Mammary epithelial cell (primary cell): ENCODE measurements at regions of chr7 and their contacts with region 1.

Region 1: GRCh38 chr7:44375236-44375699 is 49.9 kb upstream of the CAMK2B start:
- DNase-seq: no peak
- H3K4me3 ChIP-seq: no peak overlapping the region
- H3K27ac ChIP-seq: no peak overlapping the region
- H3K4me1 ChIP-seq: peaks cover 44% of the 10 kb centered on the region
- H3K27me3 ChIP-seq: no peaks in the 10 kb centered on the region
- CTCF ChIP-seq: peak in 1 of 2 donors; percentile 2

Region 2: DNA sequence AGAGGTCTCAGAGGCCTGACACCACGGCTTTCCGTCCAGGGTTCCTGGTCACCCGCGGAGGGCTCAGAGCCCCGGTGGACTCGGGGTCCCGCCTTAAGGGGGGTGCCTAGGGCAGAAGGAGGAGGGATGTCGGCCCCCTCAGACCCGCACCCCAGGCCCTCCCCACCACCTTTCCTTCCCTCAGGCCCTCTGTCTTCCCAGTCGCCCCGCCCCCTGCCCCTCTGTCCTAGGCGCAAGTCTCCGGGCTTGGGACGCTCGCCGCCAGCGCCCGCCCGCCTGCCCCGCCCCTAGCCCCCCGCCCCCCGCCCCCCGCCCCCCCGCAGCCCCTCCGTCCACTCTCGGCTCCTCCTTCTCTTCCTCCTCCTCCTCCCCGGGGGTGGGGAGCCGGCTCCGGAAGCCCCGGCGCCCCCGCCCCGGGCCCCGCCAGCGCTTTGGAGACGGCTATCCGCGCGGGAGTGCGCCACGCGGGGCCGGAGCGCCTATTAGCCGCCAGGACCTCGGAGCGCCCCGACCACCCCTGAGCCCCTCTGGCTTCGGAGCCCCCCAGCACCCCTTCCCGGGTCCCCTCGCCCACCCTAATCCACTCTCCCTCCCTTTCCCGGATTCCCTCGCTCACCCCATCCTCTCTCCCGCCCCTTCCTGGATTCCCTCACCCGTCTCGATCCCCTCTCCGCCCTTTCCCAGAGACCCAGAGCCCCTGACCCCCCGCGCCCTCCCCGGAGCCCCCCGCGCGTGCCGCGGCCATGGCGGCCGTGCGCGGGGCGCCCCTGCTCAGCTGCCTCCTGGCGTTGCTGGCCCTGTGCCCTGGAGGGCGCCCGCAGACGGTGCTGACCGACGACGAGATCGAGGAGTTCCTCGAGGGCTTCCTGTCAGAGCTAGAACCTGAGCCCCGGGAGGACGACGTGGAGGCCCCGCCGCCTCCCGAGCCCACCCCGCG is 271.1 kb before region 1 on chr7 and contains the start of gene AEBP1:
- CTCF ChIA-PET with region 1: no interaction called
- dilution Hi-C with region 1: no loop called
- in situ Hi-C with region 1: no loop called
- intact Hi-C with region 1: loop called (anchors 10 kb)
- DNase-seq: no peak
- H3K4me3 ChIP-seq: no peak within 1 kb of the TSS
- H3K27ac ChIP-seq: no peak within 1 kb of the TSS
- H3K4me1 ChIP-seq: peaks cover 22% of the 10 kb centered on the region
- H3K27me3 ChIP-seq: no peaks in the 10 kb centered on the region
- CTCF ChIP-seq: no peak
- total RNA-seq, gene AEBP1: 0.24 to 16.7 TPM

Region 3: DNA sequence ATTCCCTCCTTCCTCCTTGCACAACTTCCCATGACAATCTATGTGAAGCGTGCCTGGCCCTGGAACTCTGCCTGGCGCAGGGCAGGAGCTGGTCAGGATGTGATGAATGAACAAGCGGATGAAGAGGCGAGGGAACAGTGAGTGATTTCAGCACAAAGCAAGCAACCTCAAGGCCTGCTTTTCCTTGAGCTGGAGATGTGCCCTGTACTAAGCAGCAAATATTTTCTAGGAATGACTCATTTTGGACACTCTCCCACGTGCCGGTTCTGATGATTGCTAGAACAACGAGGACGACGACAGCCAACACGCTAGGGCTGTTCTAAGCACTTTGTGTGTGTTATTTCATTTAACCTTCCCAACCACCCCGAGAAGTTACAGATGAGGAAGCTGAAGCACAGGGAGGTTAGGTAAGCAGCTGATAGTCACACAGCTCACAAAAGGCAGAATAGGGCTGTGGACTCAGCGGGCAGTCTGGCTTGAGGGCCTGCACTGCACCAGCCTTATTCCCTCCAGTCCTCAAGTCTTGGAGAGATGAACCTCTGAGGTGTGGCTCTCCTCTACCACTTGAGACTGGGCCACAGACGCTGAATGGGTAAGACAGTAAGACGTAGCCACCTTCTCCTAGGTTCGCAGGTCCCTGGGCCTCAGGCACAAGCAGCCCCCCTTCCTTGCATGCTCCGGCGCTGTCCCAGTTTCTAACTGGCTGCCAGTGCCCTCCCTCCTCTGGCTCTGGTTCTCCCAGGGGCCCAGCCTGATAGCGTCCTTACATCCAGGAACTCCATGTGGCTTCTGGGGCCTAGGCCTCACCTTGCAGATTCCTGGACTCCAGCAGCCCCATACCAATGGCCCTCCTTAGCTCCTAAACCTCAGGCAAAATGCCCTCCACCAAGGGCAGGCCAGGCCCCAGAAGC is 115.5 kb before region 1 on chr7:
- CTCF ChIA-PET with region 1: no interaction called
- dilution Hi-C with region 1: no loop called
- in situ Hi-C with region 1: no loop called
- intact Hi-C with region 1: loop called (anchors 5 kb)
- DNase-seq: peak; percentile 71
- H3K4me3 ChIP-seq: no peak overlapping the region
- H3K27ac ChIP-seq: no peak overlapping the region
- H3K4me1 ChIP-seq: peaks cover 52% of the 10 kb centered on the region
- H3K27me3 ChIP-seq: no peaks in the 10 kb centered on the region
- CTCF ChIP-seq: no peak

Region 4: DNA sequence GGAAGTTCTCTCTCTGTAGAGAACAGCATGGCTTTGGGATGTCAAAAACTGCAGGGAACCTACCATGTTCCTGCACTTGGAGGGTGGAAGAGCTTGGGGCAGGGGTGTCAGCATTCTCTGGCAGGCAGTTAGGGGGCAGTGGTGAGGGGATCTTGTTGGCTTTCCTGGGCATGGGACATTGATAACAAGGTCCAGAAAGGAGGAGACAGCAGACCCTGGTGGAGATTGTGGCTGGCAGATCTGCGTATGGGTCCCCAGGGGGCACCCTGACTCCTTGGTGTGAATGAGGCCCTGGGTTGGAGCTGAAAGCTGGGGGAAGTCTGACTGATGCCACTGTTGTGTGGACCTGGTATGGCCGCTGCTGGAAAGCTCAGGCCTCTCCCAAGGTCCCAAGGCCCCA is 27.0 kb before region 1 on chr7:
- CTCF ChIA-PET with region 1: no interaction called
- dilution Hi-C with region 1: no loop called
- in situ Hi-C with region 1: no loop called
- intact Hi-C with region 1: no loop called
- DNase-seq: no peak
- H3K4me3 ChIP-seq: no peak overlapping the region
- H3K27ac ChIP-seq: no peak overlapping the region
- H3K4me1 ChIP-seq: no peaks in the 10 kb centered on the region
- H3K27me3 ChIP-seq: no peaks in the 10 kb centered on the region
- CTCF ChIP-seq: peak; percentile 23 to 38

Region 5: DNA sequence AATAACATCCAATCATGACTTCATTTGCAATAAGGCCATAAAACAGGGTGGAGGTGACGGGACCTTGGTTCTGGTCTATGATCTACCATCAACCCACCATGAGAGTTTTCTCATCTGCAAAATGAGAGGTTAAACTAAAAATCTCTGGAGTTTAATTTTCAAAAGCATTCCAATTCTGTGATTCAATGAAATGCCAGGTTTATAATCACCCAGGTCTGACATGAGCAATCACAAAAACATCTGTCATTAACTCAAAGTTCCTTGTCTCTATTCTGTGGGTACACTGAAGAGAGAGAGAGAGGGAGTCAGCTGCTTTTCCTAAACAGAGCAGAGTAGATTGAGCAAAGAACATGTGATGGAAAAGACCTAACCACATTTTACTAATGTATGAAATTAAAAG is 39.8 kb after region 1 on chr7:
- CTCF ChIA-PET with region 1: no interaction called
- dilution Hi-C with region 1: no loop called
- in situ Hi-C with region 1: no loop called
- intact Hi-C with region 1: loop called (anchors 1 kb)
- DNase-seq: peak; percentile 65
- H3K4me3 ChIP-seq: no peak overlapping the region
- H3K27ac ChIP-seq: no peak overlapping the region
- H3K4me1 ChIP-seq: peaks cover 33% of the 10 kb centered on the region
- H3K27me3 ChIP-seq: no peaks in the 10 kb centered on the region
- CTCF ChIP-seq: no peak